Naive thymus-derived CD4-positive, alpha-beta T cell (primary cell): ENCODE measurements at regions of chr3 and their contacts with region 1.

Region 1: GRCh38 chr3:125055913-125056745 is at the start of gene HEG1:
- DNase-seq: peak; percentile 54 to 85 (median 72)
- ATAC-seq: peak; percentile 78
- H3K4me3 ChIP-seq: peak within 1 kb of the TSS; percentile 94
- H3K4me3 Mint-ChIP-seq: peak within 1 kb of the TSS; percentile 89 to 100 (median 96)
- H3K27ac ChIP-seq: peak within 1 kb of the TSS; percentile 89
- H3K27ac Mint-ChIP-seq: peak within 1 kb of the TSS; percentile 84 to 99 (median 93)
- H3K4me1 ChIP-seq: peaks cover 34 to 35% of the 10 kb centered on the region in 2 donors
- H3K4me1 Mint-ChIP-seq: peaks cover 33 to 51% (median 46%) of the 10 kb centered on the region in 7 donors
- H3K27me3 ChIP-seq: no peaks in the 10 kb centered on the region
- H3K27me3 Mint-ChIP-seq: peaks cover 0 to 37% (median 6%) of the 10 kb centered on the region in 5 donors
- total RNA-seq, gene HEG1: 16.9 to 45.4 (median 20.0) TPM

Region 2: DNA sequence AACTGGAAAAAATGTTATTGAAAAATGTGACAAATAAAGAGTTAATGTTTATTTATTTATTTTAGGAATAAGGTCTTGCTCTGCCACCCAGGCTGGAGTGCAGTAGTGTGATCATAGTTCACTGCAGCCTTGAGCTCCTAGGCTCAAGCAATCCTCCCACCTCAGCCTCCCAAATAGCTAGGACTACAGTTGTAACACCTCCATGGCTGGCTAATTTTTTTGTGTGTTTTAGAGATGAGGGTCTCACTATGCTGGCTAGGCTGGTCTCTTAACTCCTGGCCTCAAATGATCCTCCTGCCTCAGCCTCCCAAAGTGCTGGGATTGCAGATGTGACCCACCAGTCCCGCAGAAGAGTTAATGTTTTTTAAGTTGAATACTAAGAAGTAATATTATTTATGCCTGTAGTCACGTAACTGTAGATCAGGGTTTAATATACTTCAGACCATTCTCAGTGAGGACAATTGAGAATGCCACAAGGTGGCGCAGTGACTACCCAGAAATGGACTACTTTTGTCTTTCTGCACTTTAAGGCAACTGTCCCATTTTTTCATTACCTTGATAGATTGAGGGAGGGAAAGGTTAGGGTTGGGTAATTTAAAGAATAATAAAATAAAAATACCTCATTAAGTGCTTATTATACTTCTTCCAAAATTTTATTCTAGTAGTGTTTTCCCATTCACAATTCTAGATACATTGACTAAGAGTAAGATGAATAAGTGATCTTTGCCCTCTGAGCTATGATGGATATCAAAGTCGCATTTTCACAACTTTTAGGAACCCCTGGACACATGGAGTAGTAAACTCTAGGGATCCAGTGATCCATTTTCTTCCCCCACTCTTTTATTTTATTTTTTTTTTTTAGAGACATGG is 127.6 kb before region 1 on chr3:
- CTCF ChIA-PET with region 1: no interaction called
- POLR2A ChIA-PET with region 1: no interaction called
- intact Hi-C with region 1: loop called in 1 of 2 experiments (anchors 10 kb)
- DNase-seq: peak; percentile 19 to 61 (median 37)
- ATAC-seq: peak; percentile 79
- H3K4me3 ChIP-seq: no peak overlapping the region
- H3K4me3 Mint-ChIP-seq: no peak overlapping the region
- H3K27ac ChIP-seq: no peak overlapping the region
- H3K27ac Mint-ChIP-seq: peak overlapping the region in 2 of 9 donors; percentile 18 to 49
- H3K4me1 ChIP-seq: no peaks in the 10 kb centered on the region
- H3K4me1 Mint-ChIP-seq: peaks cover 0 to 8% (median 0%) of the 10 kb centered on the region in 7 donors
- H3K27me3 ChIP-seq: no peaks in the 10 kb centered on the region
- H3K27me3 Mint-ChIP-seq: peaks cover 0 to 57% (median 11%) of the 10 kb centered on the region in 5 donors

Region 3: DNA sequence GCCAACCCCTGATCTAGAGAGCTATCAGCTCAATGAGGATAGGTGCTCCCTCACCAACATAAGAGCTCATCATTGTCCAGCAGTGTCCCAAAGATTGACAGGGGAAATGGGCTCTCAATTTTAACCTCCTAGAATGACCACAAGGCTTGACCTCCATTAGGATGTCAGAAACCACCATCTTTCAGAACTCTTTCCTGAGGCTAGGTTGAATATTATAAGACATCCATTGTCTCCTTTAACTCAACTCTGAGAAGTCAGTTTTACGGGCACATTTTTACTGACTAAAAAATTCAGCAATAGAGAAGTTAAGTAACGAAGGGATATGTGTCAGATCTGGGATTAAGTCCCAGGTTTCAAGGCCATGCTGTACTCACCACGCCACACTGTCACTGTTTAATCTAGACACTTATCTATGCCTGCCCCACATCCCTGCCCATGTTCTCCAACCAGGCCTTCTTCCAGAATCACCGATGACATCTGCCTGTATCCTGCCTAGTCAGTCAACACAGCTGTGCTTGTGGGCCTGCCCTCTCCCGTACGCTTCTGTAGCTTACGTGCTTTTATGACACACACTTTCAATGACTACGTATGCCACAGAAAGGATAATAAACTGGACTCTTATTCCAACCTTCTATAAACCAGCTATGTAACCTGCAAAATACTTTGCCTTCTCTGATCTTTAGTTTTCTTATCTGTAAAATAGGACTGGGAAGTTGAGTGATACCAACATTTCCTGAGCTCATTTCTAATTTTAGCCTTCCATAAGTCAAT is 104.4 kb before region 1 on chr3:
- CTCF ChIA-PET with region 1: no interaction called
- POLR2A ChIA-PET with region 1: no interaction called
- intact Hi-C with region 1: no loop called
- DNase-seq: no peak
- ATAC-seq: no peak
- H3K4me3 ChIP-seq: no peak overlapping the region
- H3K4me3 Mint-ChIP-seq: no peak overlapping the region
- H3K27ac ChIP-seq: no peak overlapping the region
- H3K27ac Mint-ChIP-seq: no peak overlapping the region
- H3K4me1 ChIP-seq: no peaks in the 10 kb centered on the region
- H3K4me1 Mint-ChIP-seq: no peaks in the 10 kb centered on the region
- H3K27me3 ChIP-seq: peaks cover 0 to 2% of the 10 kb centered on the region in 2 donors
- H3K27me3 Mint-ChIP-seq: peaks cover 0 to 43% (median 0%) of the 10 kb centered on the region in 5 donors

Region 4: GRCh38 chr3:125039131-125040100 is 16.7 kb before region 1 on chr3:
- CTCF ChIA-PET with region 1: no interaction called
- POLR2A ChIA-PET with region 1: interaction called, 3 read pairs
- intact Hi-C with region 1: loop called in 1 of 2 experiments (anchors 1 kb)
- DNase-seq: no peak
- ATAC-seq: no peak
- H3K4me3 ChIP-seq: no peak overlapping the region
- H3K4me3 Mint-ChIP-seq: no peak overlapping the region
- H3K27ac ChIP-seq: no peak overlapping the region
- H3K27ac Mint-ChIP-seq: peak overlapping the region in 4 of 9 donors; percentile 19 to 31 (median 22)
- H3K4me1 ChIP-seq: peaks cover 0 to 3% of the 10 kb centered on the region in 2 donors
- H3K4me1 Mint-ChIP-seq: peaks cover 18 to 69% (median 38%) of the 10 kb centered on the region in 7 donors
- H3K27me3 ChIP-seq: no peaks in the 10 kb centered on the region
- H3K27me3 Mint-ChIP-seq: peaks cover 0 to 2% (median 0%) of the 10 kb centered on the region in 5 donors

Region 5: DNA sequence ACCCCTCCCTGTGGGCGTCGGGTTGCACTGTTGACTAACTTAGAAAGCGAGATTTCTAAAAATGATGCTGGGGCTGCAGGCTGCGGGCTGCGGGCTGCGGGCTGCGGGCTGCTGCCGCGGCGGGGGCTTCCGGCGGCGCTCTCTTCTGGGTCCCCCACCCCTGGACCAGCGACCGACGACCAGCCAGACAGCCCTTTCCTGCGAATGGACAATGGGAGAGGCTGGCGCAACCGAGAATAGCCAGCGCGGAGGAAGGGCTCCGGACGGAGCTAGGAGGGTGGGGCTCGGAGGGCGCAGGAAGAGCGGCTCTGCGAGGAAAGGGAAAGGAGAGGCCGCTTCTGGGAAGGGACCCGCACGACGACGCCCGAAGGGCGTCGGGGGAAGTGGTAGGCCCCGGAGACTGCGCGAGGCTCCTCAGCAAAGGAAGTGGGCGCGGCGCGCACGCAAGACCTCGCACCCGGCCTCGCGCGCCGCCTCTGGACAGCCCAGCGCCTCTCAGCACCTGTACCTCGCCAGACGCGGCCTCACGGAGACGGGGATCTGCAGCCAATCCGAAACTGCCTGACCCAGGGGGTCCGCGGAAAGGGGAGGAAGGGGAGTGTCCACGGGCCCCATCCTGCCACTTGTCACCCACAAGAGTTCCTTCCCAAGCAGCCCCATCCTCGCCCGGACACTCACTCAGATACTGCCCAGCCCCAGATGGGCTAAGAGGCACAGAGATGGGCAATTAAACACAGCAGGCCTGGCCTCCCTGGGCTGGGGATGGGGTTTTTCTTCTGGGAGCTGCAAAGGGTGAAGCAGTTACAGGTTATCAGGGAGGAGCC is 85.7 kb after region 1 on chr3:
- CTCF ChIA-PET with region 1: no interaction called
- POLR2A ChIA-PET with region 1: interaction called, 3 read pairs
- intact Hi-C with region 1: loop called (anchors 1 kb)
- DNase-seq: peak; percentile 42 to 83 (median 66)
- ATAC-seq: peak; percentile 90
- H3K4me3 ChIP-seq: peak overlapping the region; percentile 49
- H3K4me3 Mint-ChIP-seq: peak overlapping the region; percentile 70 to 85 (median 80)
- H3K27ac ChIP-seq: peak overlapping the region; percentile 51
- H3K27ac Mint-ChIP-seq: peak overlapping the region in 8 of 9 donors; percentile 71 to 94 (median 86)
- H3K4me1 ChIP-seq: peaks cover 12 to 23% of the 10 kb centered on the region in 2 donors
- H3K4me1 Mint-ChIP-seq: peaks cover 20 to 61% (median 33%) of the 10 kb centered on the region in 7 donors
- H3K27me3 ChIP-seq: no peaks in the 10 kb centered on the region
- H3K27me3 Mint-ChIP-seq: peaks cover 0 to 44% (median 0%) of the 10 kb centered on the region in 5 donors

Region 6: DNA sequence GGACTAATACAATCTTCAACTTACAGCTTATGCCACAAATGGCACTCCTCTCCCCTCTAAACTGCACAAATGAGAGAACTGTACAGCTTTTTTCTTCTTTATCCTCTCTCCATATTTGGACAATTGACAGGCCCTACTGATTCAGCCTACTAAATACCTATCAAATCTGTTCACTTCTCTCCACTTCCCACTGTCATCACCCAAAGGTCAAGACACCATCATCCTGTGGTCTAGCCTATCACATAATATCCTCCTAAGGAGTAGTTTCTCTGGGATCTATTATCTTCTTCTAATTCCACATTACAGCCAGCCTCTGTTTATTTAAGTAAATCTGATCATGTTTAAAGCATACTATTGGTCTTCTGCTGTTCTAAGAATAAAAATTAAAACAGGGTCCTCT is 189.4 kb after region 1 on chr3:
- CTCF ChIA-PET with region 1: no interaction called
- POLR2A ChIA-PET with region 1: no interaction called
- intact Hi-C with region 1: no loop called
- DNase-seq: no peak
- ATAC-seq: no peak
- H3K4me3 ChIP-seq: no peak overlapping the region
- H3K4me3 Mint-ChIP-seq: no peak overlapping the region
- H3K27ac ChIP-seq: no peak overlapping the region
- H3K27ac Mint-ChIP-seq: peak overlapping the region in 1 of 9 donors; percentile 3
- H3K4me1 ChIP-seq: no peaks in the 10 kb centered on the region
- H3K4me1 Mint-ChIP-seq: peaks cover 0 to 16% (median 7%) of the 10 kb centered on the region in 7 donors
- H3K27me3 ChIP-seq: no peaks in the 10 kb centered on the region
- H3K27me3 Mint-ChIP-seq: no peaks in the 10 kb centered on the region

Region 7: GRCh38 chr3:125437631-125438435 is 381.7 kb after region 1 on chr3:
- CTCF ChIA-PET with region 1: interaction called, 3 read pairs
- POLR2A ChIA-PET with region 1: no interaction called
- intact Hi-C with region 1: loop called in 1 of 2 experiments (anchors 2 kb)
- DNase-seq: peak; percentile 26 to 68 (median 53)
- ATAC-seq: peak; percentile 78
- H3K4me3 ChIP-seq: no peak overlapping the region
- H3K4me3 Mint-ChIP-seq: no peak overlapping the region
- H3K27ac ChIP-seq: no peak overlapping the region
- H3K27ac Mint-ChIP-seq: no peak overlapping the region
- H3K4me1 ChIP-seq: no peaks in the 10 kb centered on the region
- H3K4me1 Mint-ChIP-seq: peaks cover 0 to 4% (median 0%) of the 10 kb centered on the region in 7 donors
- H3K27me3 ChIP-seq: no peaks in the 10 kb centered on the region
- H3K27me3 Mint-ChIP-seq: peaks cover 0 to 3% (median 0%) of the 10 kb centered on the region in 5 donors

Region 8: DNA sequence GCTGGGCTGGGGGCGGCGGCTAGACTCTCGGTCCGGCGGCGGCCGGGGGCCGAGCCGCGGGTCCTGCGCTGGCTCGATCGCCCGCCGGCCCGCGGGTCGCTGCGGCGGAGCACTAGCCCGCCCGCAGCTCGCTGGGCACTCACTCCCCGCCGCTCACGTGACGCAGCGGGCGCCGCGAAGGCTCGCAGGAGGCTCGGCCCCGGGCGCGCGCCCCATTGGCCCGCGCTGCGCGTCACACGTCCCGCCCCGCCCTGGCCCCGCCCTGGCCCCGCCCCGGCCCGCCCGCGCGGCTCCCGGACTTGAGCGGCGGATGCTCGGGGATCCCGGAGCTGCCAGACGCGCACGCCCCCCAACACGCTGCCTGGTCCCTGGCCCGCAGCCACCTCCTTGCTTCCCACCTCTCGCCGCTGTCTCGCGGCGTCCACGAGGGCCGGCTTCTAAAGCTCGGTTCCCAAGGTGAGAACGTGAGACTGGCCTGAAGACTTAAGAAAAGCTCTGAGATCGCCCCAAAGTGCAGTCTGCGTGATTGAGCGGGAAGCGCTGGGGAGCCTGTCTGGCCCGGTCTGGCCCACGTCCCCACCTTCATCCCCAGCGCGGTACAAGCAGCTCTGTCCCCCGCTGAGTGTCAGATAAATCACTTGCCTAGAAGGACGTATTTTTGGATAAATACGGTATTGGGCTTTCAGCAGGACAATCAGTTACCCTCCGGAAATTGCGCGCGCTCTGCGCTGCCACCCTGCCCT is 1301.3 kb after region 1 on chr3 and contains the start of gene KLF15:
- CTCF ChIA-PET with region 1: no interaction called
- POLR2A ChIA-PET with region 1: no interaction called
- intact Hi-C with region 1: loop called in 1 of 2 experiments (anchors 5 kb)
- DNase-seq: peak; percentile 50 to 84 (median 66)
- ATAC-seq: peak; percentile 95
- H3K4me3 ChIP-seq: peak within 1 kb of the TSS; percentile 67
- H3K4me3 Mint-ChIP-seq: peak within 1 kb of the TSS; percentile 89 to 95 (median 91)
- H3K27ac ChIP-seq: no peak within 1 kb of the TSS
- H3K27ac Mint-ChIP-seq: peak within 1 kb of the TSS in 5 of 9 donors; percentile 45 to 93 (median 72)
- H3K4me1 ChIP-seq: peaks cover 4 to 7% of the 10 kb centered on the region in 2 donors
- H3K4me1 Mint-ChIP-seq: peaks cover 4 to 17% (median 11%) of the 10 kb centered on the region in 7 donors
- H3K27me3 ChIP-seq: peaks cover 9 to 10% of the 10 kb centered on the region in 2 donors
- H3K27me3 Mint-ChIP-seq: peaks cover 45 to 52% (median 46%) of the 10 kb centered on the region in 5 donors
- total RNA-seq, gene KLF15: 0.57 to 0.81 TPM in 2 of 5 experiments, not detected in the others